ENCODE measurements at regions of chr16 and their contacts with region 1.

Region 1: GRCh38 chr16:53224951-53225533 is 170.3 kb downstream of the CHD9 start:
- DNase-seq: no peak
- H3K4me3 ChIP-seq: no peak overlapping the region
- H3K27ac ChIP-seq: no peak overlapping the region
- H3K4me1 ChIP-seq: peaks cover 0 to 12% (median 8%) of the 10 kb centered on the region in 4 donors
- H3K27me3 ChIP-seq: no peaks in the 10 kb centered on the region
- CTCF ChIP-seq: no peak
- EP300 ChIP-seq: no peak
- POLR2A ChIP-seq: no peak

Region 2: GRCh38 chr16:53166099-53166498 is 58.9 kb before region 1 on chr16:
- in situ Hi-C with region 1: no loop called
- intact Hi-C with region 1: no loop called
- DNase-seq: no peak
- H3K4me3 ChIP-seq: no peak overlapping the region
- H3K27ac ChIP-seq: no peak overlapping the region
- H3K4me1 ChIP-seq: peaks cover 0 to 6% (median 2%) of the 10 kb centered on the region in 4 donors
- H3K27me3 ChIP-seq: no peaks in the 10 kb centered on the region
- CTCF ChIP-seq: no peak
- EP300 ChIP-seq: no peak
- POLR2A ChIP-seq: no peak

Region 3: DNA sequence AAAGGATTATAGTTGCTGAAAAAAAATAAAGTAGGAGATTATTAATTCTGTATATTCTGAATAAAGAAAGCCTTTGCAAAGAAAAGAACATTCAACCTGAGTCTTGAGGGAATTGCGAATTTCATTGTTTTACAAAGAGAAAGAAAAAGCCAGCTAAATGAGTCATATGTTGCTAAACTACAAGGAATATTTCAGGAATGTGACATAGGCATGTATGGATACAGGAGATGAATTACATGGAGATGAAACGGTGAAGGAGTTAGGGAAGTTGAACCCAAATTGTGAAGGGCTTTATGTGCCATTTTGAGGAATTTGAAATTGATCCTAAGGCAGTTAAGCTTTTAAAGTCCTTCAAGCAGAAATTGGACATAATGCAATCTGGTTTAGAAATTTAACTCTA is 32.0 kb after region 1 on chr16:
- in situ Hi-C with region 1: no loop called
- intact Hi-C with region 1: no loop called
- DNase-seq: no peak
- H3K4me3 ChIP-seq: no peak overlapping the region
- H3K27ac ChIP-seq: no peak overlapping the region
- H3K4me1 ChIP-seq: no peaks in the 10 kb centered on the region
- H3K27me3 ChIP-seq: no peaks in the 10 kb centered on the region
- CTCF ChIP-seq: no peak
- EP300 ChIP-seq: no peak
- POLR2A ChIP-seq: no peak

Region 4: DNA sequence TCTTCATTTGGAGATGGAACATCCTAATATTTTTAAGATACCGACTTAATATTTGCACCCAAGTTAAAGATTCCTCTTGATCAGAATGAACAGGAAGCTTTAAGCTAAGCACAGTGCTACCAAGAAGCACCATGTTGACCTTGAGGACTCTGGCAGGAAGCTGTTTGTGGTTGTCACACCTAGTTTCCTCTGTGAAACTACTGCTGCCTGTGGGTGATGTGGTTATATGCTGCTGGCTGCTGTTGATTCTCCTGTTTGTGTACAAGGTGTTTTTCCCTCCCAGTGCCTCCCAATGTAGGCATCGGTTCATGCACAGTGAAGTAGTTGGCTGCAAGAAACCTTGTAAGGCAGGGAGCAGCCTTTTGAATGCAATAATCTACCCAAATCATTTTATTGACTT is 232.6 kb after region 1 on chr16:
- in situ Hi-C with region 1: loop called in 1 of 4 experiments (anchors 25 kb)
- intact Hi-C with region 1: no loop called
- DNase-seq: peak; percentile 57
- H3K4me3 ChIP-seq: no peak overlapping the region
- H3K27ac ChIP-seq: peak overlapping the region; percentile 24 to 48 (median 32)
- H3K4me1 ChIP-seq: peaks cover 0 to 4% (median 0%) of the 10 kb centered on the region in 4 donors
- H3K27me3 ChIP-seq: no peaks in the 10 kb centered on the region
- CTCF ChIP-seq: no peak
- EP300 ChIP-seq: no peak
- POLR2A ChIP-seq: no peak